PC-9 (cell line): ENCODE measurements at regions of chr19 and their contacts with region 1.

Region 1: DNA sequence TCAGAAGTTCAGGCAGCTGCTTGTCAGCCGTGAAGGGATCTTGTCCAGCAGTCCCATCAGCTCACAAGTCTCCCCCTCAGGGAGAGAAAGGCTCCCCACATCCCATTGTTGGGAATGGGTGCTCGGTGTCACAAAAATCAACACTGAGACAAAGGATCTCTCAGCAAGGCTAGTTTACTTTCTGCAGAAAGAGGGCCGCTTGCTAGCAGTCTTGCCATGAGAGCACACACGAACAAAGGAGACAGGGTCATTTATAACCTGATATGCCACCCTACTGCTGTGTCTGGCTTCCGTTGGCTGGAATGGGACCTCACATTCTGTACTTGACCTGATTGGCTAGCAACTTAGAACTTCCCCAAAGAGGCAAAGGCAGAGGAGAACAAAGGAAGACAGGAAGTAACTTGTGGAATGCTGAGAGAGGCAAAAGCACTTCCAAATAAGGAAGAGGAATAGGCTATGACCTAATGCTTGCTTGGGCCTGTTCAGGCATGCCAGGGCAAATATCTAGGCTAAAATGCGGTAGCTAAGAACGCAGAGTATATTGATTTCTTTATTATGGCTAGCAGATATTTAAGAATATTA is 8.7 kb upstream of the IGFL3 start:
- DNase-seq: peak; percentile 70 to 85
- H3K4me3 ChIP-seq: no peak overlapping the region
- H3K27ac ChIP-seq: no peak overlapping the region
- H3K4me1 ChIP-seq: peaks cover 13% of the 10 kb centered on the region
- H3K27me3 ChIP-seq: no peaks in the 10 kb centered on the region
- CTCF ChIP-seq: no peak

Region 2: GRCh38 chr19:45876411-45877197 is 256.6 kb before region 1 on chr19:
- CTCF ChIA-PET with region 1: no interaction called
- POLR2A ChIA-PET with region 1: no interaction called
- intact Hi-C with region 1: no loop called
- DNase-seq: no peak
- H3K4me3 ChIP-seq: no peak overlapping the region
- H3K27ac ChIP-seq: no peak overlapping the region
- H3K4me1 ChIP-seq: peaks cover 9% of the 10 kb centered on the region; the same call in 1 of the 2 replicates
- H3K27me3 ChIP-seq: peaks cover 51% of the 10 kb centered on the region
- CTCF ChIP-seq: no peak

Region 3: GRCh38 chr19:45902651-45903625 is 230.3 kb before region 1 on chr19:
- CTCF ChIA-PET with region 1: no interaction called
- POLR2A ChIA-PET with region 1: interaction called, 15 read pairs
- intact Hi-C with region 1: no loop called
- DNase-seq: peak; percentile 94 to 99
- H3K4me3 ChIP-seq: peak overlapping the region; percentile 95
- H3K27ac ChIP-seq: peak overlapping the region; percentile 7
- H3K4me1 ChIP-seq: peaks cover 32% of the 10 kb centered on the region
- H3K27me3 ChIP-seq: no peaks in the 10 kb centered on the region
- CTCF ChIP-seq: no peak

Region 4: GRCh38 chr19:46000491-46001246 is 132.5 kb before region 1 on chr19:
- CTCF ChIA-PET with region 1: no interaction called
- POLR2A ChIA-PET with region 1: no interaction called
- intact Hi-C with region 1: no loop called
- DNase-seq: no peak
- H3K4me3 ChIP-seq: no peak overlapping the region
- H3K27ac ChIP-seq: no peak overlapping the region
- H3K4me1 ChIP-seq: peaks cover 5% of the 10 kb centered on the region
- H3K27me3 ChIP-seq: no peaks in the 10 kb centered on the region
- CTCF ChIP-seq: no peak

Region 5: GRCh38 chr19:46049597-46049996 is 83.6 kb before region 1 on chr19:
- CTCF ChIA-PET with region 1: no interaction called
- POLR2A ChIA-PET with region 1: interaction called, 19 read pairs
- intact Hi-C with region 1: no loop called
- DNase-seq: no peak
- H3K4me3 ChIP-seq: no peak overlapping the region
- H3K27ac ChIP-seq: no peak overlapping the region
- H3K4me1 ChIP-seq: no peaks in the 10 kb centered on the region
- H3K27me3 ChIP-seq: peaks cover 38% of the 10 kb centered on the region
- CTCF ChIP-seq: no peak; the same call in 1 of the 2 replicates

Region 6: GRCh38 chr19:46115396-46116106 is 17.6 kb before region 1 on chr19:
- CTCF ChIA-PET with region 1: no interaction called
- POLR2A ChIA-PET with region 1: interaction called, 15 read pairs
- intact Hi-C with region 1: no loop called
- DNase-seq: peak; percentile 57 to 87
- H3K4me3 ChIP-seq: no peak overlapping the region; the same call in 1 of the 2 replicates
- H3K27ac ChIP-seq: peak overlapping the region; percentile 70
- H3K4me1 ChIP-seq: peaks cover 46% of the 10 kb centered on the region
- H3K27me3 ChIP-seq: no peaks in the 10 kb centered on the region
- CTCF ChIP-seq: no peak

Region 7: DNA sequence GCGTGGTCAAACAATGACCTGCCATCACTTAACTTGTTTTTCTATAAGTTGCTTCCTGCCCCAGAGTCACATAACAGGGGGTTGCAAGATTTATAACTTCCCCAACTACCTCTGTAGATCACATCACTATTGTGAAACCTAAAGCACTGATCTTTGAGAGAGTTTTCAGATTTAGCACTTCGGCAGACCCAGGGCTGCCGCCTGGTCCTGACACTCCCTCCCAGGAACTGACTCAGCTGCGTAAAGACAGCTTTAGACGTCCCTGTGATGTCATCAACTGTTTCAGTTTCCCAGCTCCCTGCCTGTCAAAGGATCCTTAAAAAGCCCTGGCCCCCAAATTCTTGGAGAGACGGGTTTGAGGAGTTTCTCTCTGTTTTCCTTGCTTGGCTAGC is 48.2 kb after region 1 on chr19:
- CTCF ChIA-PET with region 1: no interaction called
- POLR2A ChIA-PET with region 1: no interaction called
- intact Hi-C with region 1: loop called (anchors 2 kb)
- DNase-seq: peak in 1 of 2 experiments; percentile 73
- H3K4me3 ChIP-seq: peak overlapping the region; percentile 8; the same call in 1 of the 2 replicates
- H3K27ac ChIP-seq: peak overlapping the region; percentile 74
- H3K4me1 ChIP-seq: peaks cover 36% of the 10 kb centered on the region
- H3K27me3 ChIP-seq: no peaks in the 10 kb centered on the region
- CTCF ChIP-seq: no peak